ENCODE measurements at regions of chr7 and their contacts with region 1.

Region 1: DNA sequence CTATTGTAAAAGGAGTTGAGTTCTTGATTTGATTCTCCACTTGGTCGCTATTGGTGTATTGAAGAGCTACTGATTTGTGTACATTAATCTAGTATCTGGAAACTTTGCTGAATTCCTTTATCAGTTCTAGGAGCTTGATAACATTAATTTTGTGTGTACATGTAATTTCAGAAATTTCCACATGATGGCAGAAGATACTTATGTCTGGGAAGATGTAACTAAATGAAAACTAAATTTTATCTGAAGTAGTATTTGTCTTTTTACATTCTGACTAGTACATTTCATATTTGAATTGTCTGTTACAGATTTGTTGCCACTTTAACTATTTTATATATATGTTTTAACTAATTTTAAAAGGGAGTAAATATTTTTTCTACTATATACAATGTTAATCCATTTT is 27.6 kb downstream of the SDHAF3 start:
- DNase-seq: peak; percentile 22
- ATAC-seq: no peak
- H3K4me3 ChIP-seq: no peak overlapping the region
- H3K27ac ChIP-seq: no peak overlapping the region
- H3K4me1 ChIP-seq: no peaks in the 10 kb centered on the region
- H3K27me3 ChIP-seq: no peaks in the 10 kb centered on the region
- CTCF ChIP-seq: peak; percentile 48; the same call in 1 of the 2 replicates

Region 2: DNA sequence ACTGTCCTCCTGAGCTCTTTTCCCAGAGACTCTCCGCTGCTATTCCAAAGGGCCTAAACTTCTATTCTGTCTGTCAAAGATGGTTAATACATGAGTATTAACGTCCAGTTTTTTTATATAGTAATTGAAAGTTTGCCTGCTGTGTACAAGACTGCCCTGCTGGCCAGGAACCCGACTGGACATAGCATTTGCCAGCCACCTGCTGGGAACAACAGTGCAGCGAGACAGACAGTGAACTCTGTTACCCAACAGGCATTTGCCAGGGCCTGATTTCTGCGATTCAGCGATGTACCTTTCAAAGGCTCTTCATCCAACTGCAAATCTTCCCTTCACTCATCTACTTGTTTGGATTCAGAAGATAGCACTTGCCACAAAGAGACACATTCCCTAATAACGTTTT is 306.6 kb before region 1 on chr7:
- CTCF ChIA-PET with region 1: no interaction called
- POLR2A ChIA-PET with region 1: no interaction called
- in situ Hi-C with region 1: no loop called
- intact Hi-C with region 1: no loop called
- DNase-seq: no peak
- ATAC-seq: no peak
- H3K4me3 ChIP-seq: no peak overlapping the region
- H3K27ac ChIP-seq: no peak overlapping the region
- H3K4me1 ChIP-seq: no peaks in the 10 kb centered on the region
- H3K27me3 ChIP-seq: no peaks in the 10 kb centered on the region
- CTCF ChIP-seq: no peak

Region 3: DNA sequence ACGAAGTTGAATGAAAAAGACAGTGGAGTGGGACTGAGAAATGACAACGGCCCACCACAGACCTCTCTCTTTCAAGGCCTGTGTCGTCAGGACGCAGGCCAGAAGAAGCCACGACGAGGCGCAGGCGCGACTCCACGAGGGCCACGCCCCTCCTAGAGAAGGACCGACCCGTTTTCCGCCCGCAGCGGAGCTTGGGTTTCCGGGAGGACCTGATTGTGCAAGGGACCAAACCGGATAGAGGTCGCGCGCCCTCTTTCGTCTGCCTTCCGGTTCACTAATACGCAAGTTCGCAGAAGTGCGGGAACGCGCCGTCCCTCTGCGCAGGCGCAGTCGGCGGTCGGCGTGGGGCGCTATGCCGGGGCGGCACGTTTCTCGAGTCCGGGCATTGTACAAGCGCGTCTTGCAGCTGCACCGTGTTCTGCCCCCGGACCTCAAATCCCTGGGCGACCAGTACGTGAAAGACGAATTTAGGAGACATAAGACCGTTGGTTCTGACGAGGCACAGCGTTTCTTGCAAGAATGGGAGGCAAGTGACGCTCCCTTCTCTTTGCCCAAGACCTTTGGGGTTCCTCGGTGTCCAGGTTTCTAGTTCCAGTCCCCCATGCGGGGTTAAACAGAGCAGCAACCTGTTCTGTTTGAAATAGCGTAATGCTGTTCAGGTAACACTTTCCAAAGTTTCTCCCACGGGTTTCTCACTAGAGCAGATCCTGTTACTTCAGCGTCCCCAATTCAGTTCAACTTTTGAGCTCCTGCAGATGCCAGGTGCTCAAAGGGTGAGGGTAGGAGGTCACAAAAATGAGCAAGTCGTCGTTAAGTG is 27.5 kb before region 1 on chr7 and contains the start of gene SDHAF3:
- CTCF ChIA-PET with region 1: interaction called, 12 read pairs
- POLR2A ChIA-PET with region 1: no interaction called
- in situ Hi-C with region 1: no loop called
- intact Hi-C with region 1: no loop called
- DNase-seq: peak; percentile 93
- ATAC-seq: peak; percentile 98
- H3K4me3 ChIP-seq: peak within 1 kb of the TSS; percentile 88 to 96
- H3K27ac ChIP-seq: peak within 1 kb of the TSS; percentile 98
- H3K4me1 ChIP-seq: peaks cover 10% of the 10 kb centered on the region
- H3K27me3 ChIP-seq: no peaks in the 10 kb centered on the region
- CTCF ChIP-seq: peak; percentile 28
- total RNA-seq, gene SDHAF3: 16.1 TPM

Region 4: GRCh38 chr7:97179454-97180104 is 34.5 kb after region 1 on chr7:
- CTCF ChIA-PET with region 1: interaction called, 5 read pairs
- POLR2A ChIA-PET with region 1: no interaction called
- in situ Hi-C with region 1: no loop called
- intact Hi-C with region 1: loop called (anchors 1 kb)
- DNase-seq: peak; percentile 43
- ATAC-seq: peak; percentile 71; the same call in 1 of the 2 replicates
- H3K4me3 ChIP-seq: no peak overlapping the region
- H3K27ac ChIP-seq: no peak overlapping the region
- H3K4me1 ChIP-seq: no peaks in the 10 kb centered on the region
- H3K27me3 ChIP-seq: no peaks in the 10 kb centered on the region
- CTCF ChIP-seq: peak; percentile 87

Region 5: DNA sequence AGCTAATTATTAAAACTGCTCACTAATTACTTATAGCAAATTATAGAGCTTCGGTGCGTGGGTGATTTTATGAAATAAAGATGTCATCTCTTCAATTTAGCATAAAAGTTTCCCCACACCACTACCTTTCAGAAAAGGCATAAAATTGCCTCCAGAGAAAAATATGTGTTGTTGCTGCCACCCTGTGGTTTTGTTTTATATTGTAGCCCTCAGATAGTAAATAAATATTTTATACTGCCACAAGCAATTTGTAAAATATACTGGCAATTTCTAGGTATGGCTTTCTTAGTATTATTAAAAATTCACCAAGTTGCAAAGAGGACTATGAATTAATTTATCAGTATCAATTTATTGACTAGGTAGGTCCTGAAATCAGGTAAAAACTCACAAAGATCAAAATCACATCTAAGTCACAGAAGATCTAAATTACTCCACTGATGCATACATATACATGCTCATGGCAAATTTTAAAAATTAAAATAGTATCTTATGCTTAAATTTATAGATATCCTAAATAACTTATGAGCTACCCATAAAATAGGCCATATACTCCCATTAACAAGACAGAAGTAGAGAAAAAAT is 700.6 kb after region 1 on chr7:
- CTCF ChIA-PET with region 1: no interaction called
- POLR2A ChIA-PET with region 1: no interaction called
- in situ Hi-C with region 1: no loop called
- intact Hi-C with region 1: loop called (anchors 10 kb)
- DNase-seq: peak; percentile 25
- ATAC-seq: no peak
- H3K4me3 ChIP-seq: no peak overlapping the region
- H3K27ac ChIP-seq: no peak overlapping the region
- H3K4me1 ChIP-seq: no peaks in the 10 kb centered on the region
- H3K27me3 ChIP-seq: no peaks in the 10 kb centered on the region
- CTCF ChIP-seq: peak; percentile 59; the same call in 1 of the 2 replicates